ENCODE measurements at regions of chr13 and their contacts with region 1.

Region 1: DNA sequence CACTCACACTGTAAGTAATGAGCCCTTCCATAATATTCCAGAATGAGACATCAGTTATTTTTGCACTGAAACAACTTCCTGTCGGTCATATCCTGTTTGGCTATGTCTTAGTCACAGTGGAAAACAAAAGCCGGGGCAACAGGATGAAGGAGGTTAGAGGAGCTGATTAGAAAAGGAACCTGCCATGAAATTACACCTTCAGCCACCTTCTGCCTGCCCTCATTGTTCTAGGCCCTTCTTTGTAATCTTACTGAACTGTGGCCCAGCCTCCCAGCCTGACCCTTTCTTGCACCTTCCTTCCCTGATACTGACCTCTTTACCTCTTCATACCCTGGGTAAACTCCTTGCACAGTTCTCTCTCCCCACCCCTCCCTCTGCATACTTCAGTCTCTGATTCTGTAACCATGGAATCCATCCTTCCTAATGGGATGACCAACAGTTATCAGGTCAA is 67.3 kb downstream of the DOCK9 start:
- DNase-seq: peak; percentile 75
- ATAC-seq: peak; percentile 84
- H3K4me3 ChIP-seq: no peak overlapping the region
- H3K27ac ChIP-seq: peak overlapping the region; percentile 88
- H3K4me1 ChIP-seq: peaks cover 31% of the 10 kb centered on the region
- H3K27me3 ChIP-seq: no peaks in the 10 kb centered on the region
- CTCF ChIP-seq: no peak

Region 2: DNA sequence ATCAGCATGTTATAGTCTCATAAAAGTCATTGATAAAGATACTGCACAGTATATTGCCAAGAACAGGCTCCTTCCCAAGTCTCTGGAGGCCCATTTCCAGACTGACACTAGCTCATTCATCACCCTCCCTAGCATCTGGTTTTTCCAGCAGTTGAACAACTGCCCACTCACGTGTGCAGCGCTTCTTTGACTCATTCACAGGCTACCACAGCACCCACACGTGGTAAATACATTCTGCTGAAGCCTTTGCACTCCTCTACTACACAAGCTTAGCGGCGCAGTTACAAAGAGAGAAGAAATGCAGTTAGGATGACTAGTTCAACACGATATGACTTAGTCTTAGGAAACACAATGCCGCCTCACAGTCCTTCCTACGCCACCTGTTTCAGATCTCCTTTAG is 20.3 kb before region 1 on chr13:
- CTCF ChIA-PET with region 1: no interaction called
- POLR2A ChIA-PET with region 1: no interaction called
- intact Hi-C with region 1: loop called (anchors 2 kb)
- DNase-seq: peak; percentile 90
- ATAC-seq: peak; percentile 88
- H3K4me3 ChIP-seq: peak overlapping the region; percentile 43; the same call in 1 of the 2 replicates
- H3K27ac ChIP-seq: peak overlapping the region; percentile 77
- H3K4me1 ChIP-seq: peaks cover 26% of the 10 kb centered on the region
- H3K27me3 ChIP-seq: no peaks in the 10 kb centered on the region
- CTCF ChIP-seq: no peak

Measured in PC-3 (cell line).